ENCODE measurements at regions of chr10 and their contacts with region 1.

Region 1: GRCh38 chr10:1109795-1110673 is 53.8 kb downstream of the WDR37 start:
- DNase-seq: peak; percentile 52 to 89 (median 79)
- ATAC-seq: peak; percentile 95
- H3K4me3 ChIP-seq: peak overlapping the region; percentile 8
- H3K4me3 Mint-ChIP-seq: peak overlapping the region; percentile 62
- H3K27ac ChIP-seq: peak overlapping the region; percentile 51 to 86
- H3K27ac Mint-ChIP-seq: peak overlapping the region; percentile 92
- H3K4me1 ChIP-seq: peaks cover 13% of the 10 kb centered on the region
- H3K4me1 Mint-ChIP-seq: peaks cover 34% of the 10 kb centered on the region
- H3K27me3 ChIP-seq: no peaks in the 10 kb centered on the region
- H3K27me3 Mint-ChIP-seq: no peaks in the 10 kb centered on the region
- CTCF ChIP-seq: peak; percentile 82

Region 2: GRCh38 chr10:987870-988666 is 122.0 kb before region 1 on chr10 and contains the start of gene GTPBP4:
- CTCF ChIA-PET with region 1: no interaction called
- POLR2A ChIA-PET with region 1: no interaction called
- intact Hi-C with region 1: loop called in 1 of 2 experiments (anchors 2 kb)
- DNase-seq: peak; percentile 91 to 99 (median 97)
- ATAC-seq: peak; percentile 95
- H3K4me3 ChIP-seq: peak within 1 kb of the TSS; percentile 89 to 99
- H3K4me3 Mint-ChIP-seq: peak within 1 kb of the TSS; percentile 97
- H3K27ac ChIP-seq: peak within 1 kb of the TSS; percentile 85 to 90
- H3K27ac Mint-ChIP-seq: peak within 1 kb of the TSS; percentile 98
- H3K4me1 ChIP-seq: peaks cover 27% of the 10 kb centered on the region
- H3K4me1 Mint-ChIP-seq: peaks cover 37% of the 10 kb centered on the region
- H3K27me3 ChIP-seq: no peaks in the 10 kb centered on the region
- H3K27me3 Mint-ChIP-seq: no peaks in the 10 kb centered on the region
- CTCF ChIP-seq: no peak
- total RNA-seq, gene GTPBP4: 78.2 to 84.2 TPM

Region 3: DNA sequence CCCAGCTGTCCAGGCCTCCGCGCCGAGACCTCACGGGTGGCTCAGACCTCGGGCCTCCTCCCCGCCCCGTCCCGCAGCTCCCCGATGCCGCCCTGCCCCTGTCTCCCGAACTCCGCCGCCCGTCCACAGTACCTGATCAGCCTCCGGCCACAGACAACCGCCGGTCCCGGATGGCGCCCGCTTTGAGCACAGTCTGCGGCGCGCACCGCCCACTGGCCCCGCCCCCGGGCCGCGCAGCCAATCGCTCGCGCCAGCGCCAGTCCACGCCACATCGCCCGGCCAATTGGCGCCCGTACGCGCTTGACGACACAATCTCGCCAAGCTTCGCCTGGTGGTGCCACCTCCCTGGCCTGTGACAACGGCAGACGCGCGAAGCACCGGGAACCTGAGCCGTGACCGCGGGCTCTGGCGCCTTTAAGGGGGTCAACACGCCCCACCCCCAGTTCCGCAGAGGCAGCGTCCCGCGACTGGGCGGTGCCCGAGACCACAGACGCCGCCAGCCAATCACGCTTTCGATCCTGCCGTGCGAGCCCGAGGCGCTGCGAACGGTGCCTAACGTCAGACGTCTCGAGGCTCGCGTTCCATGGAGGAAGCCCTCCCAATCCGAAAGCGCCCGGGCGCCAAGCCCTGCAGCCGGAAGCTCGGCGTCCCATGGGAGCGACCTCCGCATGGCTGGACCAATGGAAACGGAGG is 61.2 kb before region 1 on chr10 and contains the start of gene IDI1:
- CTCF ChIA-PET with region 1: no interaction called
- POLR2A ChIA-PET with region 1: no interaction called
- intact Hi-C with region 1: loop called in 1 of 2 experiments (anchors 2 kb)
- DNase-seq: peak; percentile 91 to 99 (median 95)
- ATAC-seq: peak; percentile 74
- H3K4me3 ChIP-seq: peak within 1 kb of the TSS; percentile 81 to 91
- H3K4me3 Mint-ChIP-seq: peak within 1 kb of the TSS; percentile 94
- H3K27ac ChIP-seq: peak within 1 kb of the TSS; percentile 97 to 100
- H3K27ac Mint-ChIP-seq: peak within 1 kb of the TSS; percentile 99
- H3K4me1 ChIP-seq: peaks cover 57% of the 10 kb centered on the region
- H3K4me1 Mint-ChIP-seq: peaks cover 68% of the 10 kb centered on the region
- H3K27me3 ChIP-seq: no peaks in the 10 kb centered on the region
- H3K27me3 Mint-ChIP-seq: no peaks in the 10 kb centered on the region
- CTCF ChIP-seq: no peak
- total RNA-seq, gene IDI1: 307 to 317 TPM

Region 4: GRCh38 chr10:1368842-1369171 is 258.8 kb after region 1 on chr10:
- CTCF ChIA-PET with region 1: interaction called, 12 read pairs
- POLR2A ChIA-PET with region 1: no interaction called
- intact Hi-C with region 1: loop called (anchors 1 to 5 kb)
- DNase-seq: peak in 4 of 9 experiments; percentile 19 to 39 (median 34)
- ATAC-seq: peak; percentile 66
- H3K4me3 ChIP-seq: no peak overlapping the region
- H3K4me3 Mint-ChIP-seq: no peak overlapping the region
- H3K27ac ChIP-seq: no peak overlapping the region
- H3K27ac Mint-ChIP-seq: no peak overlapping the region
- H3K4me1 ChIP-seq: no peaks in the 10 kb centered on the region
- H3K4me1 Mint-ChIP-seq: peaks cover 2% of the 10 kb centered on the region
- H3K27me3 ChIP-seq: no peaks in the 10 kb centered on the region
- H3K27me3 Mint-ChIP-seq: peaks cover 29% of the 10 kb centered on the region
- CTCF ChIP-seq: peak; percentile 42

Region 5: GRCh38 chr10:1387459-1387858 is 277.4 kb after region 1 on chr10:
- CTCF ChIA-PET with region 1: no interaction called
- POLR2A ChIA-PET with region 1: no interaction called
- intact Hi-C with region 1: loop called (anchors 1 to 2 kb)
- DNase-seq: no peak
- ATAC-seq: no peak
- H3K4me3 ChIP-seq: no peak overlapping the region
- H3K4me3 Mint-ChIP-seq: no peak overlapping the region
- H3K27ac ChIP-seq: no peak overlapping the region
- H3K27ac Mint-ChIP-seq: no peak overlapping the region
- H3K4me1 ChIP-seq: no peaks in the 10 kb centered on the region
- H3K4me1 Mint-ChIP-seq: no peaks in the 10 kb centered on the region
- H3K27me3 ChIP-seq: no peaks in the 10 kb centered on the region
- H3K27me3 Mint-ChIP-seq: peaks cover 4% of the 10 kb centered on the region
- CTCF ChIP-seq: peak; percentile 21

Region 6: GRCh38 chr10:2978111-2978510 is 1868.1 kb after region 1 on chr10:
- CTCF ChIA-PET with region 1: no interaction called
- POLR2A ChIA-PET with region 1: no interaction called
- intact Hi-C with region 1: loop called in 1 of 2 experiments (anchors 5 kb)
- DNase-seq: peak in 2 of 9 experiments; percentile 15 to 44
- ATAC-seq: no peak
- H3K4me3 ChIP-seq: no peak overlapping the region
- H3K4me3 Mint-ChIP-seq: no peak overlapping the region
- H3K27ac ChIP-seq: no peak overlapping the region
- H3K27ac Mint-ChIP-seq: no peak overlapping the region
- H3K4me1 ChIP-seq: no peaks in the 10 kb centered on the region
- H3K4me1 Mint-ChIP-seq: no peaks in the 10 kb centered on the region
- H3K27me3 ChIP-seq: no peaks in the 10 kb centered on the region
- H3K27me3 Mint-ChIP-seq: peaks cover 6% of the 10 kb centered on the region
- CTCF ChIP-seq: peak; percentile 42

Region 7: DNA sequence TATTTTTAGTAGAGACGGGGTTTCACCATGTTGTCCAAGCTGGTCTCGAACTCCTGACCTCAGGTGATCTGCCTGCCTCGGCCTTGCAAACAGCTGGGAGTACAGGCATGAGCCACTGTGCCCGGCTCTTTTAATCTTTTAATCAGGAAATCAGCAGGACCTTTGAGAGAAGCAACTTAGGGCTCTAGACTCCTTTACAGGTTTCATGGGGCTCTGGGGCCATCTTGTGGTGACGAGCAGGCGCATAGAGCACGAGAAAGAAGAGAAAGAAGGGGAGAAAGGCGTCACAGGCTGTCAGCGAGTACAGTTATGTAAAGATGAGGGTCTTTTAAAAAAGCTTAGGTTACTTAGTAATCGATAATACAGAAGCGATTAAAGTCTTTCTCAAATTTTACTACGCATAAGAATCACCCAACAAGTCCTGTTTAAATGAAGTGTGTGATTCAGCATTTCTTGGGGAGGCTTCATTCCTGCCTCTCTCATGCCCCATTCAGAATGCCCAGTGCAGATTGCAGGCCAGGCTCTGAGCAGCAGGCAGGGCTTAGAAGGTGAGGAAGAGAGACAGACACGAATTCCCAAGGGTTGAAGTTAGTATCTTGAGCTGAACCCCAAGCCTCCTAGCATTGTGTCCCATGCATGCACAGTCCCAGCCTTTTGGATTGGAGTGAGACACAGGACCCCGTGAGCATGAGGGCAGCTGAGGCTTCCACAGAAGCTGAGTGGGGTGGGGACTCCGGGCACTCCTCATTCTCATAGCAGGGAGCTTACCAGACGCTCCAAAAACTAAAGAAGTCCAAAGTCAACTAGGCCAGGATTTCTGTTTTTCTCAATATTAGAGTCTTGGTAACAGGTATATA is 1933.7 kb after region 1 on chr10:
- CTCF ChIA-PET with region 1: interaction called, 3 read pairs
- POLR2A ChIA-PET with region 1: no interaction called
- intact Hi-C with region 1: loop called in 1 of 2 experiments (anchors 1 kb)
- DNase-seq: peak in 6 of 9 experiments; percentile 22 to 63 (median 45)
- ATAC-seq: no peak
- H3K4me3 ChIP-seq: no peak overlapping the region
- H3K4me3 Mint-ChIP-seq: no peak overlapping the region
- H3K27ac ChIP-seq: no peak overlapping the region
- H3K27ac Mint-ChIP-seq: no peak overlapping the region
- H3K4me1 ChIP-seq: no peaks in the 10 kb centered on the region
- H3K4me1 Mint-ChIP-seq: peaks cover 3% of the 10 kb centered on the region
- H3K27me3 ChIP-seq: peaks cover 0 to 4% of the 10 kb centered on the region in 2 experiments
- H3K27me3 Mint-ChIP-seq: peaks cover 22% of the 10 kb centered on the region
- CTCF ChIP-seq: peak; percentile 29

Measured in CD8-positive, alpha-beta T cell (primary cell).